Activated T-helper 1 cell treated with anti-CD3 and anti-CD28 coated beads, Interleukin-12 subunit alpha, Interleukin-12 subunit beta, Interleukin-2, Interleukin-4 antibody, amounts not matched to agents 30 ng/mL and 10 ng/mL and 1 ng/mL, durations not matched to agents 14 hours and 24 hours and 36 hours (primary cell): ENCODE measurements at regions of chr14 and their contacts with region 1.

Region 1: DNA sequence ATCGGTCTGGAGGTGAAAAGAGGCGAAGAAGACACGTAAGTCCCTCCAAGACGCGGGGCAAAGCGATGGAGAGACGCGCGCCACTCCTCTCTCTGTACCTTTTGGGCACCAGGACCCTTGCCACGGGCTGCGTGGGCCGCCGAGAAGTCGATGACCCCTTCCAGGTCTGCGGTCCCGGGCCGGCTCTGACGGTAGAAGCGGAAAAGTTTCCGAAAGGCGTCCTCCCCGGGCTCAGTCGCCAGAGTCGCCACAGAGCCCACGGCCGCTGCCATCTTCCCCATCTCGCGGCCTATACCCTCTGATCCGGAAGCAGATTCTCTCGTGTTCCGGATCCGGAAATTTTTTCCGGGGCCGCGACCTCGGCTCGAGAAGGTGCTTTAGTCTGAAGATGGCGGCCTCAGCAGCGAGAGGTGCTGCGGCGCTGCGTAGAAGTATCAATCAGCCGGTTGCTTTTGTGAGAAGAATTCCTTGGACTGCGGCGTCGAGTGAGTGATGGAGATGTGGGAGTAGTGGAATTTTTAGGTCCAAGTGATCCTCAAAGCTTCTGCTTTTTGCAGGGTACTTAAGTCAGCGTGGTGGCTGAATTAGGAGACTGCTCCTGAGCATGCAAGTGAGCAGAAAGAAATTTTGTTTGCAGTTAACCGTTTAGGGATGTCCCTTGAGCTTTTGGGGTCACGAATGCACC is at the starts of genes ALKBH1 and SLIRP:
- DNase-seq: peak; percentile 81
- H3K4me3 Mint-ChIP-seq: peak within 1 kb of the TSS; percentile 99
- H3K27ac Mint-ChIP-seq: peak within 1 kb of the TSS; percentile 98
- H3K4me1 Mint-ChIP-seq: peaks cover 41% of the 10 kb centered on the region
- H3K27me3 Mint-ChIP-seq: no peaks in the 10 kb centered on the region
- total RNA-seq, gene ALKBH1: 16.3 and 21.9 TPM in 2 replicates
- total RNA-seq, gene SLIRP: 177 and 178 TPM in 2 replicates

Region 2: DNA sequence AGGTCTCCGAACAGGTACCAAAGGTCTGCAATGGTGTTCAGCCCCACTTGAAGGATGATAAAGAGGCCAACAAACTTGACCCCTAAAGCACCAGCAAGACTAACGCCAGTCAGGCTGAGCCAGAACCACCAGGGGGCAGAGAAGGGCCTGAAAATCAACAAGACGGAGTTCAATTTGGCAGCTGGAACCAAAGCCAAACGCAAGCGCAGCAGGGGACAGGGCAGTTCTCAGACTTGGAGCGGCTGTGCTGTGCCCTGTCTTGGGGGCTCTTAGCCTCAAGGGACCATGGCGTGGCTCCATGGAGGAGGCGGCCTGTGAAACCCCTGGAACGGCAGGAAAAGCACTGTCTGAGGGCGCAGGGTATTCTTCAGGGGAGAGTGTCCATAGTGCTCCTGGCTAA is 406.8 kb before region 1 on chr14:
- intact Hi-C with region 1: loop called (anchors 5 kb)
- DNase-seq: peak; percentile 16
- H3K4me3 Mint-ChIP-seq: no peak overlapping the region
- H3K27ac Mint-ChIP-seq: no peak overlapping the region
- H3K4me1 Mint-ChIP-seq: peaks cover 24% of the 10 kb centered on the region
- H3K27me3 Mint-ChIP-seq: no peaks in the 10 kb centered on the region

Region 3: DNA sequence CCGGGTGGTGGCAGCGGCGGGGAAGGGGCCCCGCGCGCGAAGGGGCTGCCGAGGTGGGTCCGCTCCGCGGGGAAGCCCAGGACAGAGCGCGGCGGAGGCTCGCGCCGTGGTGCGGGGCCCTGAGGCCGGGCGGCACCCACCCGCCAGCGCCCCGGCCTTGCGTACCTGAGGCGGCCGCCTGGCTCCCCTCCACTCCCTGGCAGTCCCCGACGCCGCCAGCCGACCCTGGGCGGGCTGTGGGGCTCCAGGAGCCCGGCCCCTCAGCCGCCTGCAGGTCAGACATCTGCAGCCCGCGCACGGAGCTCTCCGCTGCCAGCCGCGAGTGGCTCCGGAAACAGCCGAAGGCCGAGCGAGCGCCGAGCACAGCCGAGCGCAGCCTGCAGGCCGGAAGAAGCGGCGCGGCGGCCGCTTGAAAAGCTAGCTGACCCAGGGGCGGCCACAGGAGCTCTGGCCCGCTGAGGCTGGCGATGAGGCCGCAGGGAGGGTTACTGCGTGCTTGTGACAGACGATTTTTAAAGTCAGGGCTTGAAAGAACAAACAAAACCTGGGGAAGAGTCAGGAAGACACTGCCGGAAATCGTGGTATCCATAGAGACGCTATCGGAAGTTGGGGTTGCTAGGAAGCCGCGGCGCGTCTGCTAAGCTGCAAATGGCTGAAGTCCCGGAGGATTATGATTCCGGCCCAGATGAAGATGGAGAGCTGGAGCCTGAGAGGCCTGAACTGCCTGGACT is 330.9 kb before region 1 on chr14 and contains the starts of genes SAMD15 and TMED8:
- intact Hi-C with region 1: loop called (anchors 2 kb)
- DNase-seq: peak; percentile 80
- H3K4me3 Mint-ChIP-seq: peak within 1 kb of the TSS; percentile 92
- H3K27ac Mint-ChIP-seq: peak within 1 kb of the TSS; percentile 89
- H3K4me1 Mint-ChIP-seq: peaks cover 37% of the 10 kb centered on the region
- H3K27me3 Mint-ChIP-seq: peaks cover 10% of the 10 kb centered on the region
- total RNA-seq, gene SAMD15: 0.29 and 1.1 TPM in 2 replicates
- total RNA-seq, gene TMED8: 28.1 and 28.4 TPM in 2 replicates

Region 4: DNA sequence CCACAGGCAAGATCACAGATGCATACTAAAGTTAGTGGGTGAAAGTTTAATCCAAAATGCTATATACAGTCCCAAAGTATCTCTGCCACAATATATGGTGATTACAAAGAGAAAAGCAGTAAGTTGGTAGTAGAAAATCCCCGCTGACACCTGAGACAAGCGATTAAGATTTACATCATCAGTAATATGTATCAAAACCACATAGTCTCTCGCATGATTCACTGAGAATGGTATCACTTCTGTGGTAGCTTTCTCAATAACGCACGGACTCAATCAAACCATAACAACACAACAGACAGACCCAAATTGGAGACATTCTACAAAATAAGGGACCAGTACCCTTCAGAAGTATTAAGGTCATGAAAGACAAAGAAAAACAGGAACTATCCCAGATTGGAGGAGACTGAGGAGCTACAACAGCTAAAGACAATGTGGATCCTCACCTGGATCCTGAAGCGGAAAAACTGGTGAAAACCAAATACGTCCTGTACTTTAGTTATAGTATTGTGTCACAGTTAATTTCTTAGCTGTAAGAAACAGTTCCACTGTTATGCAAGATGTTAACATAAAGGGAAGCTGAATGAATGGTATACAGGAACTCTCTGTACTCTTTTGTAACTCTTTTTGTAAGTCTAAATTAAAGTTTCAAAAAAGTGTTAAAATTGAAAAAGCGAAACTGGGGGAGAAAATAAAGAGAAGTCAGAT is 142.4 kb before region 1 on chr14:
- intact Hi-C with region 1: no loop called
- DNase-seq: no peak
- H3K4me3 Mint-ChIP-seq: no peak overlapping the region
- H3K27ac Mint-ChIP-seq: peak overlapping the region; percentile 75
- H3K4me1 Mint-ChIP-seq: peaks cover 7% of the 10 kb centered on the region
- H3K27me3 Mint-ChIP-seq: no peaks in the 10 kb centered on the region

Region 5: GRCh38 chr14:77593501-77593961 is 114.3 kb before region 1 on chr14:
- intact Hi-C with region 1: loop called (anchors 5 kb)
- DNase-seq: no peak
- H3K4me3 Mint-ChIP-seq: peak overlapping the region; percentile 66
- H3K27ac Mint-ChIP-seq: peak overlapping the region; percentile 85
- H3K4me1 Mint-ChIP-seq: peaks cover 57% of the 10 kb centered on the region
- H3K27me3 Mint-ChIP-seq: no peaks in the 10 kb centered on the region

Region 6: DNA sequence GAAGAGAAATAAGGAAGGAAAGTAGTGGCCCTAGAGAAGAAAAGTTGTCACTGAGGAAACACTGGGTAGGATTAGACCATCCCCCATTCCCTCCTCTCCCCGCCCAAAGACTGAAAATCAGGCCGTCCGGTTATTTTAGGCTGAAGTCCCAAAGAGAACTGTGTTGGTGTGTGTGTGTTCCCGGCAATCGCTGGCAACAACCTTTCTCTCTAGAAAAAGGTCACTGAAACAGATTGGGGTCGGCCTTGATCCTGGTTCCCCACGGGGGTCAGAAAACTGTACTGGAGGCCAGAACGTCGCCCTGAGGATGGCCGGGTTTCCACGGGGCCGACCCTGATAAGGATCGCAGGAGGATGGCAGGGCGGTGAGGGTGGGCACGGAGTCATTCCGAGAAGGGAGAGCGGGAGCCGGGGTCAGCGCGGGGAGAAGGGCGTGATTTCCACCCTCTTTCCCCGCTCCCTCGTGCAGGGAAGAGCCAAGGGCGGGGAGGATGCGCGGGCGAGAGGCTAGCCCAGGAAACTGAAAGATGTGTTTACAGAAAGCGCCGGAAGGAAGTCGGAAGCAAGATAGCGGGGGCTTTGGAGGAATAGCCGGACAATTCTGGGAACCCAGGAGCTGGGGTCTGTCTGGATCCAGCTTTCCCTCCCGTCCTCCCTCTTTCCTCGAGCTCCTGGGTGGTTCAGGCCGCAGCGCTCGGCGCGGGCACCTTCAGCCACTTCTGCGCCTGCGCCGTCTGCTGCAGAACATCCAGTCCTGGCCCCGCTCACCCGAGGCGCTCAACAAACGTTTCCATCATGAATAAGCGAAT is 66.1 kb before region 1 on chr14:
- intact Hi-C with region 1: loop called (anchors 1 kb)
- DNase-seq: peak; percentile 46
- H3K4me3 Mint-ChIP-seq: peak overlapping the region; percentile 78
- H3K27ac Mint-ChIP-seq: peak overlapping the region; percentile 92
- H3K4me1 Mint-ChIP-seq: peaks cover 20% of the 10 kb centered on the region
- H3K27me3 Mint-ChIP-seq: no peaks in the 10 kb centered on the region

Region 7: DNA sequence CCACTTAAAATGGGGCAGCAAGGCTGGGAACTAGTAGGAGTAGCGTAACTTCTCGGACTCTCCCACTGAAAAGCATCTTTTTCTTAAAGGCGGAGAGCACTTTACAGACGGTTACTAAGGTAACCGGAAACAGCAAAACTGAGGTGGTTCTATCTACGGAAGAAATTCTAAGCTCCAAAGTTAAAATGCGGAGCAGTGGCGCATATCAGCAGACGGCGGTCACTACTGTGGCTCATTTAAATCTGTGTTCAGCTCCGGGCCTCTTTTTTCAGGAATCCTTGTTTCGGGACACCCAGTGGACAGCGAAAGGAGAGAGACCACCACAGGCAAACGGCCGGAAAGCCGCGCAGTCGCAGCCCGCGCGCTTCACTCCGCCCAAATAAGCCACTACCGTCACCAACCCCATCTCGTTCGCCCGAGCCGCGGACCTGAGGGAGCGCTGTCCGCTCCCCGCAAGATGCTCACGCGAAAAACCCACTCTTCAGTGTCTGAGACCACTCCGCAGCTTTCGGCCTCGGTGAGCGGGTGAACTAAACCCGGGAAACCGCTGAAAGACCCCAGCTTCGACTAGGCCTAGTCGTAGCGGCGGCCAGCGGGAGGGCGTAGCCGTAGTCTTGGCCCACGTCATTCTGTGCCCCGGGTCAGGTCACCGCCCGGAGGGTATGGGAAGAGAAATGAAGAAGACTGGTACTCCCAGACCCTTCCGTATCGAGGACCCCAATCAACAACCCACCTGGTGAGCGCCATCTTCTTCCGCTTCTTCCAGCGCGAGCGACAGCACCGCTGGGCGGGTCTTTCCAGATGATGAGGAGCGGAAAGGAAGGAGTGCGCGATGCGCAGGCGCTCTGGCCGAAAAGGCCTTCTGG is 52.7 kb after region 1 on chr14 and contains the start of gene SNW1:
- intact Hi-C with region 1: loop called (anchors 1 kb)
- DNase-seq: peak; percentile 91
- H3K4me3 Mint-ChIP-seq: peak within 1 kb of the TSS; percentile 96
- H3K27ac Mint-ChIP-seq: peak within 1 kb of the TSS; percentile 97
- H3K4me1 Mint-ChIP-seq: peaks cover 38% of the 10 kb centered on the region
- H3K27me3 Mint-ChIP-seq: peaks cover 6% of the 10 kb centered on the region
- total RNA-seq, gene SNW1: 112 and 118 TPM in 2 replicates